Activated B cell treated with CpG ODN at 0.5 μM for 24 hours (primary cell): ENCODE measurements at regions of chr20 and their contacts with region 1.

Region 1: GRCh38 chr20:47561180-47561579 is 59.5 kb downstream of the NCOA3 start:
- DNase-seq: no peak
- ATAC-seq: no peak
- H3K4me3 Mint-ChIP-seq: peak overlapping the region; percentile 46
- H3K27ac Mint-ChIP-seq: peak overlapping the region; percentile 2
- H3K4me1 Mint-ChIP-seq: peaks cover 95% of the 10 kb centered on the region
- H3K27me3 Mint-ChIP-seq: no peaks in the 10 kb centered on the region
- CTCF ChIP-seq: no peak

Region 2: DNA sequence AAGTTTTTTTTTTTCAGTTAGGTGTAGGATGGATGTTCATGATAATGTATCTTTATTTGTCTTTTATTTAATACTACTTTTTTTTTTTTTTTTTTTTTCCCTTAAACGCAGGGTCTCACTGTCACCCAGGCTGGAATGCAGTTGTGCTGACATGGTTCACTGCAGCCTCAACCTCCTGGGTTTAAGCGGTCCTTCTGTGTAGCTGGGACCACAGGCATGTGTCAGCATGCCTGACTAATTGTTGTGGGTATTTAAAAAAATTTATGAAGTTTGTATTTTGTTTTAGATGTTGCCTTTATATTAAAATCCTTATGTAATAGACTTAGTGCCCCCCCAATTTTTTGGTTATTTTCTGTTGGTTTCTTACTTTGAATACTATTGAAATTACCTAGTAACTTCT is 16.9 kb before region 1 on chr20:
- CTCF ChIA-PET with region 1: no interaction called
- POLR2A ChIA-PET with region 1: interaction called, 4 read pairs
- intact Hi-C with region 1: loop called (anchors 2 kb)
- DNase-seq: no peak
- ATAC-seq: peak; percentile 56
- H3K4me3 Mint-ChIP-seq: no peak overlapping the region
- H3K27ac Mint-ChIP-seq: peak overlapping the region; percentile 2
- H3K4me1 Mint-ChIP-seq: peaks cover 82% of the 10 kb centered on the region
- H3K27me3 Mint-ChIP-seq: no peaks in the 10 kb centered on the region
- CTCF ChIP-seq: no peak

Region 3: GRCh38 chr20:47576516-47577033 is 15.4 kb after region 1 on chr20:
- CTCF ChIA-PET with region 1: no interaction called
- POLR2A ChIA-PET with region 1: no interaction called
- intact Hi-C with region 1: loop called (anchors 1 kb)
- DNase-seq: no peak
- ATAC-seq: peak; percentile 63
- H3K4me3 Mint-ChIP-seq: peak overlapping the region; percentile 71
- H3K27ac Mint-ChIP-seq: peak overlapping the region; percentile 80
- H3K4me1 Mint-ChIP-seq: peaks cover 91% of the 10 kb centered on the region
- H3K27me3 Mint-ChIP-seq: no peaks in the 10 kb centered on the region
- CTCF ChIP-seq: no peak

Region 4: GRCh38 chr20:47614703-47615309 is 53.6 kb after region 1 on chr20:
- CTCF ChIA-PET with region 1: no interaction called
- POLR2A ChIA-PET with region 1: no interaction called
- intact Hi-C with region 1: no loop called
- DNase-seq: no peak
- ATAC-seq: no peak
- H3K4me3 Mint-ChIP-seq: no peak overlapping the region
- H3K27ac Mint-ChIP-seq: peak overlapping the region; percentile 10
- H3K4me1 Mint-ChIP-seq: peaks cover 63% of the 10 kb centered on the region
- H3K27me3 Mint-ChIP-seq: no peaks in the 10 kb centered on the region
- CTCF ChIP-seq: no peak